ENCODE measurements at regions of chr20 and their contacts with region 1.

Region 1: DNA sequence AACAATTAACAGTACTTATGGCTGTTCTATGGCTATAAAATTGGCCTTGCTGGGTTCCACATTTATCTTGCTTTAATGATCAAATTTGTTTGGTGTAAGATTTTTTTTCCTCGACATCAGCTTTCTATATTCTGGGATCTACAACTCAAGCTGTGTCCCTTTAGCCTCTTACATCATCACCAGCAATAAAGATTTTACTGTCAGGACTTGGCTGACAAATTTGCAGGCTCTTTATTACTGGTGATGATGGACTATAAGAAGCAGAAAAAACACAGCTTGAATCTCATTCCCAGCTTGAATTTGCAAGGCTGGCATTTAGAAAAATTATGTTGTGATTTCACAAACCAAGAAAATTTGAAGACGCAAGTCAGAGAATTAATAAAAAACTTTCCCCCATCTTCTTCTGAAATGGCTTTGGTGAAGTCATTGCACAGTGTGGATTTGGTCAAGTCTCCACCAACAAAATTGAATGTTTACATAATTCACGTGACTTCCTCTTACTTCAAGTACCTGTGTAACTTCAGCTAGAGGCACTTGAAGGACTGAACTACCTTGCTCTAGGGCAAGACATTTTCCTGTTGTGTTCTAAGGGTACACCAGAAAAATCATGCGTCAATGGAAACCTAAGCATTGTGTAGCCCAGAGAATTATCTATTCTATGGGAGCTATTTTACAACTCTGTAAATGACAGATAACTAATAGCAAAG is 175.0 kb downstream of the CBLN4 start:
- DNase-seq: no peak
- H3K4me3 ChIP-seq: no peak overlapping the region
- H3K27ac ChIP-seq: no peak overlapping the region
- H3K4me1 ChIP-seq: no peaks in the 10 kb centered on the region
- H3K27me3 ChIP-seq: no peaks in the 10 kb centered on the region
- CTCF ChIP-seq: no peak
- POLR2A ChIP-seq: no peak

Region 2: DNA sequence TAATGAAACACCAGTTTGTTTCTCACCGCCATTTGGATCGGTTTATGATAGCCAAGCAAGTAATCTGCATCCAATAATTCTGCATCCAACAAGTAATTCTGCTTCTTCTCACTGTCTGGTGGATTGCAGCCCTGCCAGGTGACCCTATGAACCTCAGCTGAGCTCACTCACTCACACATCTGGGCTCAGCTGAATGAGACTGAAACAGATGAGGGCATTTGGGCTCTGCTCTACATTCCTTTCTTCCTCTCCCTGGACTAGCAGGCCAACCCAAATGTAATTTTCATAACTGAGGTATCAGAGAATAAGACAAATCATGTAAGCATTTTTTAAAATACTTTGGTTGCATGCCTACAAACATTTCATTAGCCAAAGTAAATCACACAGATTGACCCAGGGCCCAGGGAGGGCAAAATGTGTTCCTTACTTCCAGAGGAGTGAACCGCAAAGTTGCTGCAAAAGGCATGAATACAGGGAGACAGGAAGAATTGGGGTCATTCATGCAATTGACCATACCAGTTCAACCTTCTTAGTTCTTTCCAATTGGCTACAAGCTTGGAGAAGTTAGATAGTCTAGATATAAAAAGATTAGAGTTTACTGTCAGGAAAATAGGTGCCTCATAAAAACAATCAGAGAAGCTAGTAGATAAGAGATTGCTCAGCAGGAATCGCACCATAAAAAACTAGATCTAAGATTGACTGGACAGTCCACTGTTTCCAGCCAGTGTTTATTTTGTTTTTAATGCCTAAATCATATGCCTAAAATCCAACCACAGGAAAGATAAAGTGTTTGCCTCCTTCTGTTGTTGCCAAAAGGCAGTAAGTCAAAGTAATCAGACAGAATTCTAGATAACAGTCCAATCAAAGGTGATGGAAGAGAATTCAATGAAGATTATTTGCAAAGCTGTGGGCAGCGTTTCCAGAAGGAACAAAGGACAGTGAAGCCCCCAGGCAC is 131.4 kb after region 1 on chr20:
- intact Hi-C with region 1: loop called (anchors 5 kb)
- DNase-seq: no peak
- H3K4me3 ChIP-seq: no peak overlapping the region
- H3K27ac ChIP-seq: no peak overlapping the region
- H3K4me1 ChIP-seq: no peaks in the 10 kb centered on the region
- H3K27me3 ChIP-seq: no peaks in the 10 kb centered on the region
- CTCF ChIP-seq: no peak
- POLR2A ChIP-seq: no peak

Region 3: GRCh38 chr20:56429502-56429901 is 599.2 kb after region 1 on chr20:
- intact Hi-C with region 1: no loop called
- DNase-seq: no peak
- H3K4me3 ChIP-seq: no peak overlapping the region
- H3K27ac ChIP-seq: no peak overlapping the region
- H3K4me1 ChIP-seq: no peaks in the 10 kb centered on the region
- H3K27me3 ChIP-seq: no peaks in the 10 kb centered on the region
- CTCF ChIP-seq: no peak
- POLR2A ChIP-seq: no peak